SK-N-SH (cell line): ENCODE measurements at regions of chr15 and their contacts with region 1.

Region 1: DNA sequence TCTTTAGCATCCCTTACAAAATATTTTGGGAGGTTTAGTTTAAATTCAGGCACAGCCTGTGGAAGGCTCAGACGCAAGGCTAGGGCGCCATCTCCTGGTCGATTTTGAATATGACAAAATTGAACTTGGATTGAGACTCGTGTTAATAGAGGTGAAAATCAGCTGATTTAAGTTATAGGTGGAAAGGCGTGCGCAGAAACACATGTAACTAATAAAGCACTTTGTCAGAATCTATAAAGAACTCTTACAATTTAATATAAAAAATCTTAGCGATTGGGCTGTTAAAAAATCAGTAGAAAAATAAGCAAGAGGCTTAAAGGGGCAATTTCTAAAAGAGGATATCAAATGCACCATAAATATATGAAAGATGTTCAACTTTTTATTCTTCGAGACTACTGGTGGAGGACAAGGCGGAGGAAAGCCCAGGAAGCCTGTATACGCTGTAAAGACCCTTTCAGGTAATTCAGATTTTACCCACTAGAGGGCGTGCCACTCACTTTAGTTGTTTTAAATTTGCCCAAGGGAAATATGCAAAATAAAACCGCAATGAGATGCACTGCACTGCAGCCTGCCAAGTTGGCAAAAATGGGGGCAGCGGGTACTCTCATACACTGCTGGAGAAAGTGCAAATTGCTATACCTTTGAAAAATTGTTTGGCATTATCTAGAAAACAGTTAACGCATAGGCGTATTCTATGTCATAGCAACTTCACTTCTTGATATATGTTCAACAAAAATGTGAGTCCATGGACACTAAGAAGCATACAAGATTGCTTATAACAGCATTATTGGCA is 64.7 kb downstream of the SLC30A4 start:
- DNase-seq: peak; percentile 74
- H3K4me3 ChIP-seq: peak overlapping the region; percentile 50 to 67
- H3K27ac ChIP-seq: peak overlapping the region; percentile 76 to 94
- H3K4me1 ChIP-seq: peaks cover 10 to 21% of the 10 kb centered on the region in 2 experiments
- H3K27me3 ChIP-seq: no peaks in the 10 kb centered on the region
- CTCF ChIP-seq: peak; percentile 78
- EP300 ChIP-seq: no peak; a peak in 1 of 4 replicates
- RAD21 ChIP-seq: peak; percentile 92

Region 2: GRCh38 chr15:45198337-45199135 is 259.3 kb before region 1 on chr15:
- CTCF ChIA-PET with region 1: interaction called, 48 read pairs
- POLR2A ChIA-PET with region 1: no interaction called
- DNase-seq: peak; percentile 74
- H3K4me3 ChIP-seq: peak overlapping the region; percentile 70 to 87
- H3K27ac ChIP-seq: peak overlapping the region; percentile 93 to 94
- H3K4me1 ChIP-seq: peaks cover 0 to 4% of the 10 kb centered on the region in 2 experiments; a peak in 1 of 4 replicates
- H3K27me3 ChIP-seq: no peaks in the 10 kb centered on the region
- CTCF ChIP-seq: peak; percentile 94
- EP300 ChIP-seq: peak in 1 of 2 experiments; percentile 52; a peak in 1 of 4 replicates
- RAD21 ChIP-seq: peak; percentile 28

Region 3: GRCh38 chr15:45320581-45321205 is 137.1 kb before region 1 on chr15:
- CTCF ChIA-PET with region 1: interaction called, 19 read pairs
- POLR2A ChIA-PET with region 1: no interaction called
- DNase-seq: no peak
- H3K4me3 ChIP-seq: no peak overlapping the region
- H3K27ac ChIP-seq: no peak overlapping the region
- H3K4me1 ChIP-seq: no peaks in the 10 kb centered on the region
- H3K27me3 ChIP-seq: no peaks in the 10 kb centered on the region; the same call in 1 of the 2 replicates
- CTCF ChIP-seq: no peak
- EP300 ChIP-seq: no peak
- RAD21 ChIP-seq: no peak

Region 4: GRCh38 chr15:45435124-45435903 is 22.5 kb before region 1 on chr15:
- CTCF ChIA-PET with region 1: interaction called, 26 read pairs
- POLR2A ChIA-PET with region 1: no interaction called
- DNase-seq: no peak
- H3K4me3 ChIP-seq: no peak overlapping the region
- H3K27ac ChIP-seq: no peak overlapping the region
- H3K4me1 ChIP-seq: no peaks in the 10 kb centered on the region
- H3K27me3 ChIP-seq: no peaks in the 10 kb centered on the region
- CTCF ChIP-seq: no peak
- EP300 ChIP-seq: no peak
- RAD21 ChIP-seq: no peak

Region 5: DNA sequence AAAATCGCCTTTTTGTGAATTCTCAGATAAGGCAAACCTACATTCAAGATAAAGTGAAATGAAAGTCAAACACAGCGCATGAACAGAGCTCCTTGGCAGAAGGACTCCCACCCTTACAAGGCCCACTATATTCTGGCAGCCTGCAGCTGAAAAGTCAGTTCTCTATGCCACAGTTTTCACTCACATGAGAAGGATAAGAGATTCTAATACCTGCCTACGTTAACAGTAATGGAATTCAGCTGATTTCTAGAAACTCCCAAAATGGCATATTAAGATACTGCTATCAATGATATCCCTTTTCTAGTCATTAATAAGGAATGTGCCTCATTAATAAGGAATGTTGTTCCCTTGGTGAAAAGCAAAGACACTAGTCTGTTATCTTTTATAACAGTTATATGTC is 37.8 kb after region 1 on chr15:
- CTCF ChIA-PET with region 1: interaction called, 11 read pairs
- POLR2A ChIA-PET with region 1: no interaction called
- DNase-seq: no peak
- H3K4me3 ChIP-seq: no peak overlapping the region
- H3K27ac ChIP-seq: no peak overlapping the region
- H3K4me1 ChIP-seq: peaks cover 0 to 12% of the 10 kb centered on the region in 2 experiments; a peak in 2 of 4 replicates
- H3K27me3 ChIP-seq: no peaks in the 10 kb centered on the region
- CTCF ChIP-seq: no peak
- EP300 ChIP-seq: no peak
- RAD21 ChIP-seq: no peak

Region 6: DNA sequence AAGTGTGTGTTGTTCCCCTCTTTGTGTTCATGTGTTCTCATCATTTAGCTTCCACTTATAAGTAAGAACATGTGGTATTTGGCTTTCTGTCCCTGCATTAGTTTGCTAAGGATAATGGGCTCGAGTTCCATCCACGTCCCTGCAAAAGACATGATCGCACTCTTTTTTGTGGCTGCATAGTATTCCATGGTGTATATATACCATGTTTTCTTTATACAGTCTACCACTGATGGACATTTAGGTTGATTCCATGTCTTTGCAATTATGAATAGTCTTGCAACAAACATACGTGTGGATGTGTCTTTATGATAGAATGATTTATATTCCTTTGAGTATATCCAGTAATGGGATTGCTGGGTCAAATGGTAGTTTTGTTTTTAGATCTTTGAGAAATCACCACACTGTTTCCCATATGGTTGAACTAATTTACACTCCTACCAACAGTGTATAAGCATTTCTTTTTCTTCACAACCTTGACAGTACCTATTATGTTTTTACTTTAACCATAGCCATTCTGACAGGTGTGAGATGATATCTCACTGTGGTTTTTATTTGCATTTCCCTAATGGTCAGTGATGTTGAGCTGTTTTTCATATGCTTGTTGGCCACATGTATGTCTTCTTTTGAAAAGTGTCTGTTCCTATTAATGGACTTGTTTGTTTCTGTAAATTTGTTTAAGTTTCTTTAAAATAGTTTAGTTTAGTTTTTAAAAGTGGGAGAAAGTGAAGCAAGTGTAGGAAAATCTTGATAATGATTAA is 86.6 kb after region 1 on chr15:
- CTCF ChIA-PET with region 1: no interaction called
- POLR2A ChIA-PET with region 1: no interaction called
- DNase-seq: no peak
- H3K4me3 ChIP-seq: no peak overlapping the region
- H3K27ac ChIP-seq: no peak overlapping the region
- H3K4me1 ChIP-seq: no peaks in the 10 kb centered on the region
- H3K27me3 ChIP-seq: no peaks in the 10 kb centered on the region
- CTCF ChIP-seq: no peak
- EP300 ChIP-seq: no peak
- RAD21 ChIP-seq: no peak

Region 7: GRCh38 chr15:45634442-45635190 is 176.8 kb after region 1 on chr15 and contains the start of gene SQOR:
- CTCF ChIA-PET with region 1: interaction called, 14 read pairs
- POLR2A ChIA-PET with region 1: no interaction called
- DNase-seq: peak; percentile 81
- H3K4me3 ChIP-seq: peak within 1 kb of the TSS; percentile 57 to 61
- H3K27ac ChIP-seq: no peak within 1 kb of the TSS
- H3K4me1 ChIP-seq: peaks cover 3 to 8% of the 10 kb centered on the region in 2 experiments; a peak in 2 of 4 replicates
- H3K27me3 ChIP-seq: no peaks in the 10 kb centered on the region
- CTCF ChIP-seq: no peak
- EP300 ChIP-seq: no peak
- RAD21 ChIP-seq: no peak
- polyA plus RNA-seq, gene SQOR: 7.8 and 9.1 TPM in 2 replicates

Region 8: DNA sequence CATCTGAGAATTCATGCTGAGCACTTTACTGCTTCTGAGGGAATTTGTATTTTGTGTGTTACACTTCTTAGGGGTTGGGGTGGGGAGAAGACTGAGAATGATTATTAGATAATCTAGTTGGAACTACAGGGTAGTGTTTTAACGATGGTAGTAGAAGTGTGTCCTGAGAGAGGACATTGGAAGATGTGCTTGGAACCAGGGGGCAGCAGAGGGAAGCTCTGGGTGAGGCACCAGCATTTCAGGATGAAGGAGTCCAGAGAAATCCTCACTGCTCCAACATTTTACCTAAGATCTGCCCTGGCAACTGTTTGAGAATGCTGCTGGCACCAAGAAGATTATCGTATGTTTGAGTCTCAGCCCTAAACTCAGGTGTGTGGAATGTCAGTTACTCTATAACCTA is 322.5 kb after region 1 on chr15:
- CTCF ChIA-PET with region 1: no interaction called
- POLR2A ChIA-PET with region 1: no interaction called
- DNase-seq: no peak
- H3K4me3 ChIP-seq: no peak overlapping the region
- H3K27ac ChIP-seq: no peak overlapping the region
- H3K4me1 ChIP-seq: no peaks in the 10 kb centered on the region; a peak in 1 of 4 replicates
- H3K27me3 ChIP-seq: no peaks in the 10 kb centered on the region
- CTCF ChIP-seq: no peak
- EP300 ChIP-seq: no peak
- RAD21 ChIP-seq: no peak

Region 9: DNA sequence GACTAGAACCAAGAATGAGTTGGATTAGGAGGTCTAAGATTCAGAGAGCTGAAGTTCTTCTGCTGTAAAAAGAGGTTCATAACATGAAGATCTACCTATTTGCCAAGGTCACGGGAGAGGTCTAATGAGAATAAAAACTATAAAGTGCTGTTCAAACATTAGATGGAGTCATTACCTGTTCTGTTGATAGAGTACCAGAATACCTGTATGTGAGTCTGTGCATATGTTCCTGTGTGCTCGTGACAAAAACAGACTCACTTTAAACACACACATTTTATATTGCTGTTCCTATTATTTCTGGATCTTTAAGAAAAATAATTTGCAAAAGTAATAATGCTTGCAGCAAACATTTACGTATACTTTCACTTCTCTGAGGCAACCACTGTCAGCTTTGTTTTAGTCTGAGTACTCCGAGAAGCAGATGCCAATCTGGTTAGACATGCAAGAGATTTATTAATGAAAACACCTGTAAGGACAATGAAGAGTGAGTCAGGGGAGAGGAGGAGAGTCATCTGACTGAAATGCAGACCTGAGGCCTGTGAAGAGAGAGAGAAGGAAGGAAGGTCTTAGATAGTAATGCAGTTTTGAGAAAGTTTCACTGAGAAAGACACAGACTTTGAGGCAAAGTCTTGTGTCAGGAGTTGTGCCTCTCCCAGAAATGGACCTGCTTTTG is 398.2 kb after region 1 on chr15:
- CTCF ChIA-PET with region 1: no interaction called
- POLR2A ChIA-PET with region 1: no interaction called
- DNase-seq: no peak
- H3K4me3 ChIP-seq: no peak overlapping the region
- H3K27ac ChIP-seq: no peak overlapping the region
- H3K4me1 ChIP-seq: no peaks in the 10 kb centered on the region
- H3K27me3 ChIP-seq: no peaks in the 10 kb centered on the region
- CTCF ChIP-seq: no peak
- EP300 ChIP-seq: no peak
- RAD21 ChIP-seq: no peak